Activated B cell treated with CpG ODN at 0.5 μM for 24 hours (primary cell): ENCODE measurements at regions of chr12 and their contacts with region 1.

Region 1: GRCh38 chr12:132638541-132639418 is 20.2 kb downstream of the P2RX2 start:
- DNase-seq: no peak
- ATAC-seq: no peak
- H3K4me3 Mint-ChIP-seq: no peak overlapping the region
- H3K27ac Mint-ChIP-seq: no peak overlapping the region
- H3K4me1 Mint-ChIP-seq: peaks cover 9% of the 10 kb centered on the region
- H3K27me3 Mint-ChIP-seq: no peaks in the 10 kb centered on the region
- CTCF ChIP-seq: no peak

Region 2: GRCh38 chr12:132600048-132601032 is 38.4 kb before region 1 on chr12:
- CTCF ChIA-PET with region 1: interaction called, 3 read pairs
- POLR2A ChIA-PET with region 1: no interaction called
- intact Hi-C with region 1: loop called (anchors 2 kb)
- DNase-seq: no peak
- ATAC-seq: peak; percentile 57
- H3K4me3 Mint-ChIP-seq: peak overlapping the region; percentile 79
- H3K27ac Mint-ChIP-seq: no peak overlapping the region
- H3K4me1 Mint-ChIP-seq: peaks cover 27% of the 10 kb centered on the region
- H3K27me3 Mint-ChIP-seq: peaks cover 18% of the 10 kb centered on the region
- CTCF ChIP-seq: no peak